ENCODE measurements at regions of chr3 and their contacts with region 1.

Region 1: DNA sequence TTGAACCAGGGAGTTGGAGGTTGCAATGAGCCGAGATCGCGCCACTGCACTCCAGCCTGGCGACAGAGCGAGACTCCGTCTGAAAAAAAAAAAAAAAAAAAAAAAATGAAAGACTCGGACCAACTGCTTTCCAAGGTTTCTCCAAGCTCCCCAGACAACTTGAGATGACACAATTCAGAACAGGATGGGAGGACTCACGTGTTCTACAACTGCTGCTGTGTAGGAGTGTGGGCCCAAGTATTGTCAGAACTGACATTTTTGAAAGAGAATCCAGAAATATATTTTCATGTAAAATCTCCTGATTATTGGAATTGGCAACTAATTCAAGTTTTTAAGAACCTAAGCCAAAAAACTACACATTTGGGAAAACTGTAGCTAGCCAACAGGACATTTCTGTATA is 109.5 kb upstream of the ETV5 start:
- DNase-seq: no peak
- ATAC-seq: no peak
- H3K4me3 ChIP-seq: no peak overlapping the region
- H3K4me3 Mint-ChIP-seq: no peak overlapping the region
- H3K27ac ChIP-seq: no peak overlapping the region
- H3K27ac Mint-ChIP-seq: no peak overlapping the region
- H3K4me1 ChIP-seq: peaks cover 0 to 2% of the 10 kb centered on the region in 2 experiments
- H3K4me1 Mint-ChIP-seq: peaks cover 0 to 3% (median 2%) of the 10 kb centered on the region in 3 donors
- H3K27me3 ChIP-seq: peaks cover 0 to under 1% of the 10 kb centered on the region in 2 experiments
- H3K27me3 Mint-ChIP-seq: peaks cover 4 to 6% of the 10 kb centered on the region in 2 donors

Region 2: GRCh38 chr3:185744997-185745843 is 473.2 kb before region 1 on chr3:
- CTCF ChIA-PET with region 1: no interaction called
- POLR2A ChIA-PET with region 1: no interaction called
- DNase-seq: no peak
- ATAC-seq: no peak
- H3K4me3 ChIP-seq: no peak overlapping the region
- H3K4me3 Mint-ChIP-seq: no peak overlapping the region
- H3K27ac ChIP-seq: no peak overlapping the region
- H3K27ac Mint-ChIP-seq: no peak overlapping the region
- H3K4me1 ChIP-seq: no peaks in the 10 kb centered on the region
- H3K4me1 Mint-ChIP-seq: peaks cover 0 to 4% (median 3%) of the 10 kb centered on the region in 3 donors
- H3K27me3 ChIP-seq: peaks cover 0 to 4% of the 10 kb centered on the region in 2 experiments
- H3K27me3 Mint-ChIP-seq: peaks cover 12 to 21% of the 10 kb centered on the region in 2 donors

Region 3: GRCh38 chr3:186077466-186077865 is 141.0 kb before region 1 on chr3:
- CTCF ChIA-PET with region 1: no interaction called
- POLR2A ChIA-PET with region 1: interaction called in 1 of 2 experiments, 10 read pairs
- DNase-seq: no peak
- ATAC-seq: no peak
- H3K4me3 ChIP-seq: no peak overlapping the region
- H3K4me3 Mint-ChIP-seq: no peak overlapping the region
- H3K27ac ChIP-seq: no peak overlapping the region
- H3K27ac Mint-ChIP-seq: no peak overlapping the region
- H3K4me1 ChIP-seq: no peaks in the 10 kb centered on the region
- H3K4me1 Mint-ChIP-seq: no peaks in the 10 kb centered on the region
- H3K27me3 ChIP-seq: peaks cover 0 to 2% of the 10 kb centered on the region in 2 experiments
- H3K27me3 Mint-ChIP-seq: peaks cover 7 to 10% of the 10 kb centered on the region in 2 donors

Measured in T-cell (primary cell).